Cardiac septum (tissue), 1 donor: ENCODE measurements at regions of chr1 and their contacts with region 1.

Region 1: GRCh38 chr1:41537788-41538351 is 53.4 kb upstream of the EDN2 start:
- DNase-seq: peak; percentile 78

Region 2: DNA sequence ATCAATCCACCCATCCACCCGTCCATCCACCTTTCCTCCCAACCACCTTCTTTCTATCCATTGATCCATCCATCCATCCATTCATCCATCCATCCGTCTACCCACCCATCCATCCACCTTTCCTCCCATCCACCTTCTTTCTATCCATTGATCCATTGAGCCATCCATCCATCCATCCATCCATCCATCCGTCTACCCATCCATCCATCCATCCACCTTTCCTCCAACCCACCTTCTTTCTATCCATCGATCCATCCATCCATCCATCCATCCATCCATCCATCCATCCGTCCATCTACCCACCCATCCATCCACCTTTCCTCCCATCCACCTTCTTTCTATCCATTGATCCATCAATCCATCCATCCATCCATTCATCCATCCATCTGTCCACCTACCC is 48.3 kb before region 1 on chr1:
- intact Hi-C with region 1: no loop called
- DNase-seq: no peak

Region 3: DNA sequence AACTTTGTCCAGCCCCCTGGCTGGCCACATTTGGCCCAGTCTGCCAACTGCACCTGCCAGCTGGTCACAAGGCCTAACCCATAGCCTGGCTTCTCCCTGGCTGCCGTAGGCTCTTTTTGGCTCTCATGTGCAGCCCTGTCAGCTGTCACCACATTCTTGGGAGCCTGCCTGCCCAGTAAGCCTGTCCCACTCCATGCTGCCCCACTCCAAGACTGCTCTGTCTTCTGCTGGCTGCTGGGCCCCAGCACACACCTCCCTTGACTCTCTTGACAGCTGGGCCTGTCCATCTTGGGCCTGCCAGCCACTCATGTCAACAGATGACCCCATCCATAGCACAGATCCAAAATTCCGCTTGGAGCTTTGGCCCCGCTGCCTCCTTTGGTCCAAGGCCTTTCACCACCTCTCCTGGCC is 20.9 kb after region 1 on chr1:
- intact Hi-C with region 1: loop called (anchors 1 kb)
- DNase-seq: peak; percentile 86

Region 4: GRCh38 chr1:41739061-41739955 is 201.4 kb after region 1 on chr1:
- intact Hi-C with region 1: no loop called
- DNase-seq: peak; percentile 95